BJ (cell line): ENCODE measurements at regions of chr12 and their contacts with region 1.

Region 1: GRCh38 chr12:64890873-64891468 is 66.5 kb downstream of the TBC1D30 start:
- DNase-seq: no peak
- H3K4me3 ChIP-seq: no peak overlapping the region
- H3K27me3 ChIP-seq: peaks cover 10% of the 10 kb centered on the region
- CTCF ChIP-seq: peak; percentile 53

Region 2: DNA sequence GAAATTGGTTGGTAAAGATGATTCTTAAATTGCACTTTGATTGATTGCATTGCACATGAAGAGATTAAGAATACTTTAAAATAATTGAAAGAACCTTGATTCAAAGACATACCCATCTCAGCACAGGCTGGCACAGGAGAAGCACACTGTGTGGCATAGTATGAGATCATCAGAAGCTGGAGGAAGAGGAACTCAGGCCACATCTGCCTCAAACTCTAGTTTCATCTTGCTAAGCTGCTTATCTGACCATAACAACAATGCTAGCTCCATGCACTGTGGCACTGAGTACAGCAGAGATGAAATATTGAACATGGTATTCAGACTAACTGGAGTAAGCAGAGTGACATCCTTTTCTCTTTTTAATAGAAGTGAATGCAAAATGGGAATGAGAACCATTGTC is 32.6 kb after region 1 on chr12:
- CTCF ChIA-PET with region 1: no interaction called
- POLR2A ChIA-PET with region 1: no interaction called
- DNase-seq: no peak
- H3K4me3 ChIP-seq: no peak overlapping the region
- H3K27me3 ChIP-seq: no peaks in the 10 kb centered on the region; the same call in 1 of the 2 replicates
- CTCF ChIP-seq: no peak

Region 3: GRCh38 chr12:65106948-65107347 is 216.0 kb after region 1 on chr12:
- CTCF ChIA-PET with region 1: interaction called, 26 read pairs
- POLR2A ChIA-PET with region 1: no interaction called
- DNase-seq: no peak
- H3K4me3 ChIP-seq: no peak overlapping the region
- H3K27me3 ChIP-seq: peaks cover 4% of the 10 kb centered on the region
- CTCF ChIP-seq: peak; percentile 33; the same call in 1 of the 2 replicates

Region 4: GRCh38 chr12:65121049-65121955 is 230.3 kb after region 1 on chr12 and contains the start of gene WIF1:
- CTCF ChIA-PET with region 1: interaction called, 39 read pairs
- POLR2A ChIA-PET with region 1: interaction called, 4 read pairs
- DNase-seq: no peak
- H3K4me3 ChIP-seq: no peak within 1 kb of the TSS
- H3K27me3 ChIP-seq: peaks cover 23% of the 10 kb centered on the region
- CTCF ChIP-seq: peak; percentile 19; the same call in 1 of the 2 replicates
- polyA plus RNA-seq, gene WIF1: not detected in 2 replicates